GM18951 (cell line): ENCODE measurements at regions of chrX and their contacts with region 1.

Region 1: GRCh38 chrX:8743126-8743732 is 11.3 kb upstream of the ANOS1 start:
- POLR2A ChIP-seq: no peak

Region 2: DNA sequence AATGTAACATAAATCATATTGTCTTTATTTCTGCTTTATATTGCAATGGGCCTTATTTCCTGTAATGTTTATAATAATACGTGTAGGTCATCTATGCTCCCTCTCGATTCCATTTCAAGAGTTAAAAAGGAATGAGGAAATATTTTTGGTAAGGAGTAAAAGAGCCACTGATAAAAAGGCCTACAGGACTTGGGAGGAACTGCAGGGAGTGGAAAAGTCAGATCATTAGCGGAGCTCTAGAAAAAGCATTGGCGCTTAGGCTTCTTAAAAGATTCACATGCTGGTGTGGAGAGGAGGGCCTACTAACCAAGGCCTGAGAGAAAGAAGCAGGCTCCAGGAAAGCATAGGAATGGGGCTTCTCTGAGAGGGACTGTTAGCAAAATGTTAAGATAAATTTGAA is 733.1 kb before region 1 on chrX:
- in situ Hi-C with region 1: loop called (anchors 25 kb)
- POLR2A ChIP-seq: no peak

Region 3: GRCh38 chrX:9195199-9195880 is 452.1 kb after region 1 on chrX:
- in situ Hi-C with region 1: no loop called
- POLR2A ChIP-seq: no peak